Aorta (tissue), 5 donors: ENCODE measurements at regions of chr1 and their contacts with region 1.

Region 1: DNA sequence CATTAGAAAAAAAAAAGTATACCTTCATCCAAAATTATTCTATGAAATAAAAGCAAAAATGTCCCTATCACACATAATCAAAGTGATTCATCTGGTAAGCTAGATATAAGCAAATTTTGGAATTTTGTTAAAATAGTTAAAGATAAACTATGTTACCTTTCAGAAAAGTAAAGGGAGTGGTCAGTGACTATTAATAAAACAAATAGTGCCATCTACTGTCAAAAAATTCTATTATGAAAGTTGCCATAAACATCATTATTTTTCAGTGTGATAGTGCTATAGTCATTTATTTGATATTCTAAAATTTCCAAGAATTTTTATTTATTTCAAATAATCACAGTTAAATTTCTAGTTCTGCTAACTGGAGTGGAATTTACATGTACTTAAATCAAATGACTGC is 803.7 kb downstream of the KCNT2 start:
- DNase-seq: no peak
- ATAC-seq: no peak
- H3K4me3 ChIP-seq: no peak overlapping the region
- H3K27ac ChIP-seq: no peak overlapping the region
- H3K4me1 ChIP-seq: no peaks in the 10 kb centered on the region
- H3K27me3 ChIP-seq: no peaks in the 10 kb centered on the region

Region 2: GRCh38 chr1:195828325-195828724 is 23.8 kb after region 1 on chr1:
- intact Hi-C with region 1: loop called in 1 of 2 experiments (anchors 1 kb)
- DNase-seq: no peak
- ATAC-seq: no peak
- H3K4me3 ChIP-seq: no peak overlapping the region
- H3K27ac ChIP-seq: no peak overlapping the region
- H3K4me1 ChIP-seq: no peaks in the 10 kb centered on the region
- H3K27me3 ChIP-seq: no peaks in the 10 kb centered on the region

Region 3: DNA sequence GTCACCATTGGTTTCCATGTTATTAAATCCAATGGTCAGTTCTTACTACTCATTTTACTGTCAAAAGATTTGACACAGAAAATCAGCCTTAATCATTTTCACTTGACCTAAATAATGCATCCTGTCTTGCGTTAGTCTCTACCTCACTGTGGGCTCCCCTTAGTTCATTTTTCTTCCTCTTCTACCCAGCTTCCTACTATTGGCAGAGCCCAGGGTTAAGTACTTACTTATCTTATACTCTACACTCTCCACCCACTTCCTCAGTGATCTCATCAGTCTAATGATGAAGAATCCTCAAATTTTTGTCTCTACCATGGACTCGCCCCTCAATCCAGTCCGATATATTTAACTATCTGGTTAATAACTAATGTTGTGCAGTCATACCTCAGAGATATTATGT is 67.8 kb after region 1 on chr1:
- intact Hi-C with region 1: no loop called
- DNase-seq: no peak
- ATAC-seq: no peak
- H3K4me3 ChIP-seq: no peak overlapping the region
- H3K27ac ChIP-seq: no peak overlapping the region
- H3K4me1 ChIP-seq: no peaks in the 10 kb centered on the region
- H3K27me3 ChIP-seq: no peaks in the 10 kb centered on the region

Region 4: GRCh38 chr1:196098000-196098399 is 293.5 kb after region 1 on chr1:
- intact Hi-C with region 1: no loop called
- DNase-seq: no peak
- ATAC-seq: no peak
- H3K4me3 ChIP-seq: no peak overlapping the region
- H3K27ac ChIP-seq: no peak overlapping the region
- H3K4me1 ChIP-seq: no peaks in the 10 kb centered on the region
- H3K27me3 ChIP-seq: no peaks in the 10 kb centered on the region